Psoas muscle (tissue), 8 donors: ENCODE measurements at regions of chr12 and their contacts with region 1.

Region 1: DNA sequence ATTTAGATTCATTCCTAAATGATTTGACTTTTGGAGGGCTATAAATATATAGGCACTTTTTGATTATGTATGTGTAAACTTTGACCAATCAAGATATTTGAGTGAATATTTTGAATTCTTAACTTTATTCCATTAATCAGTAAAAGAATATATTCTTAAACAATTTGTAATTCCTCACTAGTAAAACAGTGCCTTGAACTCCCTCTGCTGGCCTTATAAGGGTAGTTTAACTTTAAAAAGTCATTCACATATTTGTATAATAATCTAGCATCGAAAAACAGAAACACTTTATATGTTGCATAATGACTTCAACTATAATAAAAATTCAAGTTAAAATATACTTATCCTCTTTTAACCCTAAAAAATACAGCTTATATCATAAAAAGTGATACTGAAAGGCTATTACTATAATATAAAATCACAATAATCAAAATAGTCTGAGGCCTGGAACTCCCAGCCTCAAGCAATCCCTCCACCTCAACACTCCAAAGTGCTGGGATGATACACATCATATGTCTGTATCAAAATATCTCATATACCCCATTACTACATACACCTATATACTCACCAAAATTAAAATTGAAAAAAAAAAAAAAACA is 31.2 kb downstream of the CCDC59 start:
- DNase-seq: no peak
- ATAC-seq: no peak
- H3K4me3 ChIP-seq: no peak overlapping the region
- H3K27ac ChIP-seq: no peak overlapping the region
- H3K4me1 ChIP-seq: no peaks in the 10 kb centered on the region
- H3K27me3 ChIP-seq: no peaks in the 10 kb centered on the region
- CTCF ChIP-seq: peak; percentile 44

Region 2: DNA sequence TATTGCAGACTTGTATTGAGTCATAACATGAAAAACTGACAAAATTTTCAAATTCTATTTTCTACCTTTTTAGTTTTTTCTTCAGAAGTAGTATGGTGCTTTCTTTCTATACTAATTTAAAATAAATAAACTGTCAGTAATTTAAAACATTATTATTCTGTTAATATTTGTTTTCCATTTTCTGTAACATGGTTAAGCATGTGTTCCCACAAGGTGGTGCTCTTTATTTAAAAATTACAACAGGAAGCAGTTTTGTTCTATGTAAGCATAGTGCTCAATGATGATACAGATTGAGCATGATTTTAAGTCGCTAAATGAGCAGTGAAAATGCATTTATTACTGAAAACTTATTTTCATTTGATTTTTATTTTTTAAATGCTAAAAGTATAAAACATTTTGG is 682.5 kb before region 1 on chr12:
- intact Hi-C with region 1: loop called in 1 of 2 experiments (anchors 10 kb)
- DNase-seq: no peak
- ATAC-seq: no peak
- H3K4me3 ChIP-seq: no peak overlapping the region
- H3K27ac ChIP-seq: no peak overlapping the region
- H3K4me1 ChIP-seq: no peaks in the 10 kb centered on the region
- H3K27me3 ChIP-seq: no peaks in the 10 kb centered on the region
- CTCF ChIP-seq: peak; percentile 51

Region 3: GRCh38 chr12:82507686-82508085 is 180.7 kb after region 1 on chr12:
- intact Hi-C with region 1: no loop called
- DNase-seq: no peak
- ATAC-seq: no peak
- H3K4me3 ChIP-seq: no peak overlapping the region
- H3K27ac ChIP-seq: no peak overlapping the region
- H3K4me1 ChIP-seq: no peaks in the 10 kb centered on the region
- H3K27me3 ChIP-seq: no peaks in the 10 kb centered on the region
- CTCF ChIP-seq: no peak